ENCODE measurements at regions of chr5 and their contacts with region 1.

Region 1: GRCh38 chr5:149409253-149409948 is 30.3 kb upstream of the IL17B start:
- DNase-seq: no peak
- H3K4me3 ChIP-seq: peak overlapping the region; percentile 42 to 76 (median 67)
- H3K27ac ChIP-seq: peak overlapping the region; percentile 91 to 92
- H3K4me1 ChIP-seq: no peaks in the 10 kb centered on the region
- H3K27me3 ChIP-seq: no peaks in the 10 kb centered on the region
- CTCF ChIP-seq: no peak
- POLR2A ChIP-seq: no peak

Region 2: GRCh38 chr5:149448831-149449714 is 39.7 kb after region 1 on chr5:
- intact Hi-C with region 1: loop called (anchors 1 kb)
- DNase-seq: no peak
- H3K4me3 ChIP-seq: no peak overlapping the region
- H3K27ac ChIP-seq: peak overlapping the region; percentile 86 to 94
- H3K4me1 ChIP-seq: peaks cover 16 to 28% of the 10 kb centered on the region in 2 donors
- H3K27me3 ChIP-seq: no peaks in the 10 kb centered on the region
- CTCF ChIP-seq: no peak
- POLR2A ChIP-seq: no peak